CD4-positive, alpha-beta memory T cell (primary cell): ENCODE measurements at regions of chr17 and their contacts with region 1.

Region 1: GRCh38 chr17:45148183-45149036 is at the start of gene HEXIM1:
- DNase-seq: peak; percentile 99 to 100 (median 99)
- H3K4me3 ChIP-seq: peak within 1 kb of the TSS; percentile 90 to 95
- H3K4me3 Mint-ChIP-seq: peak within 1 kb of the TSS; percentile 93 to 99 (median 96)
- H3K27ac ChIP-seq: peak within 1 kb of the TSS; percentile 88
- H3K27ac Mint-ChIP-seq: peak within 1 kb of the TSS; percentile 98 to 100 (median 100)
- H3K4me1 ChIP-seq: peaks cover 59% of the 10 kb centered on the region
- H3K4me1 Mint-ChIP-seq: peaks cover 26 to 61% (median 44%) of the 10 kb centered on the region in 4 donors
- H3K27me3 ChIP-seq: no peaks in the 10 kb centered on the region
- H3K27me3 Mint-ChIP-seq: peaks cover 1 to 5% of the 10 kb centered on the region in 2 donors
- total RNA-seq, gene HEXIM1: 28.8 to 30.8 TPM

Region 2: GRCh38 chr17:45051060-45051719 is 97.2 kb before region 1 on chr17 and contains the start of gene DCAKD:
- CTCF ChIA-PET with region 1: no interaction called
- POLR2A ChIA-PET with region 1: interaction called, 22 read pairs
- intact Hi-C with region 1: no loop called
- DNase-seq: peak; percentile 88 to 91 (median 89)
- H3K4me3 ChIP-seq: peak within 1 kb of the TSS; percentile 66 to 98
- H3K4me3 Mint-ChIP-seq: peak within 1 kb of the TSS; percentile 87 to 95 (median 89)
- H3K27ac ChIP-seq: peak within 1 kb of the TSS; percentile 96
- H3K27ac Mint-ChIP-seq: peak within 1 kb of the TSS; percentile 93 to 98 (median 96)
- H3K4me1 ChIP-seq: peaks cover 42% of the 10 kb centered on the region
- H3K4me1 Mint-ChIP-seq: peaks cover 18 to 46% (median 31%) of the 10 kb centered on the region in 4 donors
- H3K27me3 ChIP-seq: no peaks in the 10 kb centered on the region
- H3K27me3 Mint-ChIP-seq: no peaks in the 10 kb centered on the region
- total RNA-seq, gene DCAKD: 32.0 to 32.1 TPM

Region 3: DNA sequence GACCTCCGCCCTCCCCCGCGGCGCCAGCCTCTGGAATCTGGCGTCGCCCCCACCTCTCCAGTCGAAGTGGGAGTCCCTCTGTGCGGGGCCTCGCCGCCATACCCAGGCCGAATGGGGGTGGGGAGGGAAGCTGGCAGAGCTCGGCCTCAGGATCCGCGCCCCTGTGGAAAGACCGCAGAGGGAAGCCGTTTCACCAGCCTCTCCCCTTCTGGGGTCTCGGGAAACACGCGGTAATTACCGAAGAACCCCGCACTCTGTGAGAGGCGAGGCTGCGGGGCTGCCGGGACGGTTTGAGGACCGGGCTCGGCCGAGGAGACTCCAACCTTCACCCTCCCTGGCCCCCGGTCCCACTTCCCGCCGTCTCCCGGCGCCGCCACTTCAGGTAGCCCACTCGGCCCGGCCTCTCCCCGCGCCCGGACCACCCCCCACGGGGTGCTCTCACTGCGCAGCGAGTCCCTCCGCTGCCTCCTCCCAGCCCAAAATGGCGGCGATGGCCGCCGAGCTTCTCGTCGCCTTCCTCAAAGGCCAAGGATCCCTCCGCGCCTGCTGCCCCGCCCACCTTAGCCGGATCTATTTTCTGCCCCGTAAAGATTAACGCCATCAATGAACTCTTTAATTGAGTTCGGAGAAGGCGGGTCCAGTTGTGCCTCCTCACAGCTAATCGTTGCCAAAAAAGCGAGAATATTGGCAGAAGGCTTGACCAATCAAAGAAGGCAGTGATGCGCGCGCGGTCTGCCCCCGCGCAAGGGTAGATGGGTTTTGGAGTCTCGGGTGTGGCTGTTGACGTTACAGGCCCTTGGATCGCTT is 12.8 kb after region 1 on chr17:
- CTCF ChIA-PET with region 1: interaction called, 163 read pairs
- POLR2A ChIA-PET with region 1: interaction called, 865 read pairs
- intact Hi-C with region 1: loop called (anchors 1 kb)
- DNase-seq: peak; percentile 99 to 100 (median 99)
- H3K4me3 ChIP-seq: peak overlapping the region; percentile 72 to 87
- H3K4me3 Mint-ChIP-seq: peak overlapping the region; percentile 85 to 99 (median 98)
- H3K27ac ChIP-seq: peak overlapping the region; percentile 99
- H3K27ac Mint-ChIP-seq: peak overlapping the region; percentile 90 to 100 (median 98)
- H3K4me1 ChIP-seq: peaks cover 33% of the 10 kb centered on the region
- H3K4me1 Mint-ChIP-seq: peaks cover 19 to 52% (median 39%) of the 10 kb centered on the region in 4 donors
- H3K27me3 ChIP-seq: no peaks in the 10 kb centered on the region
- H3K27me3 Mint-ChIP-seq: no peaks in the 10 kb centered on the region

Region 4: GRCh38 chr17:45228763-45229539 is 80.5 kb after region 1 on chr17:
- CTCF ChIA-PET with region 1: interaction called, 6 read pairs
- POLR2A ChIA-PET with region 1: interaction called, 173 read pairs
- intact Hi-C with region 1: loop called (anchors 2 kb)
- DNase-seq: peak; percentile 78 to 97 (median 84)
- H3K4me3 ChIP-seq: peak overlapping the region; percentile 43 to 74
- H3K4me3 Mint-ChIP-seq: peak overlapping the region; percentile 96 to 100 (median 99)
- H3K27ac ChIP-seq: peak overlapping the region; percentile 97
- H3K27ac Mint-ChIP-seq: peak overlapping the region; percentile 99 to 100 (median 100)
- H3K4me1 ChIP-seq: peaks cover 95% of the 10 kb centered on the region
- H3K4me1 Mint-ChIP-seq: peaks cover 48 to 99% (median 69%) of the 10 kb centered on the region in 4 donors
- H3K27me3 ChIP-seq: no peaks in the 10 kb centered on the region
- H3K27me3 Mint-ChIP-seq: no peaks in the 10 kb centered on the region

Region 5: DNA sequence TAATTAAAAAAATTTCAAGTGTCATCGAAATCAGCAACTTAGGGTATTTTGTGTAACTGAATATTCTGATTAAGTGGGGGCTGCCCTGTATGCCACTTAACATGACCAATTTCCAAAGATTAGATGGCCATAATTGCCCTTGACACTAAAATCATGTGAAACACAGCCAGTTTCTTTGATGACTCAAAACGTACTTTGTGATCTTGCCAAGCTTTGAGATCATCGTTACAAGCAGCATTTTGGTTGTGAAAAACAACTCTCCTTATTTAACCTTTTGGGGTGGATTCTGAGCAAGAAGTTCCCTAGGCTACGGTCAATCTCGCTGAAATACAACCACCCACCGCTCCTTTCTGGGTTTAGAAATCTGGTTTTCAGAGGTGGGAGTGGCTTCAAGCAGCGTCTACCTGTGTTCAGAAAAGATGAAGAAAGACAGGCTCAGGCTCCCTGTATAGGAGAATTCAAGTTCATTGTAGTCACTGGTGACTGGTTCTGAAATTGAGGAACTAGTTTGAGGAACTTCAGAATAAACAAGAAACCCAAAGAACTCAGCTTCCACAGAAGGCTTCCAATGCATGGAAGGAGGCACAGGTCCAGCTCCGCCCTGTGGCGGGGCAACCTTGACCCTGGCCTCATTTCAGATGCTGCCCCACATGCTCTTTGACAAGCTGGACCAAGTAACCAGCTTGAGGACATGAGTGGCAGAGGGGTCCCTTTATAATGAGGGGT is 159.0 kb after region 1 on chr17:
- CTCF ChIA-PET with region 1: no interaction called
- POLR2A ChIA-PET with region 1: interaction called, 10 read pairs
- intact Hi-C with region 1: no loop called
- DNase-seq: peak in 3 of 5 donors; percentile 29 to 69 (median 35)
- H3K4me3 ChIP-seq: no peak overlapping the region
- H3K4me3 Mint-ChIP-seq: peak overlapping the region in 7 of 8 donors; percentile 21 to 68 (median 57)
- H3K27ac ChIP-seq: peak overlapping the region; percentile 43
- H3K27ac Mint-ChIP-seq: peak overlapping the region; percentile 66 to 91 (median 86)
- H3K4me1 ChIP-seq: peaks cover 94% of the 10 kb centered on the region
- H3K4me1 Mint-ChIP-seq: peaks cover 58 to 91% (median 73%) of the 10 kb centered on the region in 4 donors
- H3K27me3 ChIP-seq: no peaks in the 10 kb centered on the region
- H3K27me3 Mint-ChIP-seq: no peaks in the 10 kb centered on the region